ENCODE measurements at regions of chr3 and their contacts with region 1.

Region 1: DNA sequence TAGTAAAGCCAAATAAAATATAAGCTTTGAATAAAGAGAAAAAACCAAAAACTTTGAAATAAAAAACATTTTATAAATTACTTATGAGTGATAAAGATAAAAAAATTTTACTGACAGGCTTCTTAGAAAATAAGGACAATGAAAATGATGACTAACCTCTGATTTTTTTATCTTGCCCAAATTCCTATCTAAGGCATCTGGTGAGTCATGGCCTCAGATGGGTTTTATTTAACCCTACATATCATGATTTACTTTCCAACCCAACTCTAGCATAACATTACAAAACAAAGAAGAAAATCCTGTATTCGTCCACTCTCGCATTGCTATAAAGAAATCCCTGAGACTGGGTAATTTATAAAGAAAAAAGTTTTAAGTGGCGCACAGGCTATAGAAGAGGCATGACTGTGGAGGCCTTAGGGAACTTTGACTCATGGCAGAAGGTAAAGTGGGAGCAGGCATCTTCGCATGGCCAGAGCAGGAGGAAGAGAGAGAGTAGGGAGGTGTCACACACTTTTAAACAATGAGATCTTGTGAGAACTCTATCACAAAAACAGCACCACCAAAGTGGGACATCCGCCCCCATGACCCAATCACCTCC is 152.1 kb downstream of the NEK10 start:
- DNase-seq: peak; percentile 7 to 68
- H3K4me3 ChIP-seq: no peak overlapping the region
- H3K27ac ChIP-seq: no peak overlapping the region
- H3K4me1 ChIP-seq: peaks cover 32% of the 10 kb centered on the region
- H3K27me3 ChIP-seq: no peaks in the 10 kb centered on the region
- CTCF ChIP-seq: no peak

Region 2: GRCh38 chr3:27194494-27195458 is 22.3 kb before region 1 on chr3:
- CTCF ChIA-PET with region 1: no interaction called
- POLR2A ChIA-PET with region 1: no interaction called
- intact Hi-C with region 1: loop called (anchors 2 kb)
- DNase-seq: no peak
- H3K4me3 ChIP-seq: no peak overlapping the region
- H3K27ac ChIP-seq: peak overlapping the region; percentile 75
- H3K4me1 ChIP-seq: peaks cover 17% of the 10 kb centered on the region
- H3K27me3 ChIP-seq: no peaks in the 10 kb centered on the region
- CTCF ChIP-seq: no peak

Region 3: DNA sequence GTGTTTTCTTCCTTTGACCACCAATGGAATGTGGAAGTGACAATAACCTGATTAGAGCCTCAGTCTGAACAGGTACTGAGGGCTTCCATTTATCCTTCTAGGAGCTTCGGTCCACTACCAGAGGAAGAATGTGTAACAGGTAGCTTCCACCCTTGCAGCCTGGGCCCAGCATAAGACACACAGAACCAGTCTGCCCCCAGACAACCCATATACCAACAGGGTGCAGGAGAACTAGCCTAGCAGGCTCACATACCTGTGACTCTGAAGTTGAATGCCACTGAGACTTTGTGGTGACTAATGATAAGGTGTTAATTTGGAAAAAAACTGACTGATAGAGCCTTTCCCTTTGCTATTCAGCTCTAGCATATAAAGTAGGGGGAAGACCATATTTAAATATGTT is 14.1 kb before region 1 on chr3:
- CTCF ChIA-PET with region 1: no interaction called
- POLR2A ChIA-PET with region 1: no interaction called
- intact Hi-C with region 1: loop called (anchors 2 kb)
- DNase-seq: peak in 1 of 2 experiments; percentile 43
- H3K4me3 ChIP-seq: no peak overlapping the region
- H3K27ac ChIP-seq: no peak overlapping the region
- H3K4me1 ChIP-seq: no peaks in the 10 kb centered on the region
- H3K27me3 ChIP-seq: no peaks in the 10 kb centered on the region
- CTCF ChIP-seq: no peak

Measured in PC-9 (cell line).